ENCODE measurements at regions of chr1 and their contacts with region 1.

Region 1: GRCh38 chr1:162056043-162056442 is 13.4 kb upstream of the NOS1AP start:
- DNase-seq: peak; percentile 81

Region 2: DNA sequence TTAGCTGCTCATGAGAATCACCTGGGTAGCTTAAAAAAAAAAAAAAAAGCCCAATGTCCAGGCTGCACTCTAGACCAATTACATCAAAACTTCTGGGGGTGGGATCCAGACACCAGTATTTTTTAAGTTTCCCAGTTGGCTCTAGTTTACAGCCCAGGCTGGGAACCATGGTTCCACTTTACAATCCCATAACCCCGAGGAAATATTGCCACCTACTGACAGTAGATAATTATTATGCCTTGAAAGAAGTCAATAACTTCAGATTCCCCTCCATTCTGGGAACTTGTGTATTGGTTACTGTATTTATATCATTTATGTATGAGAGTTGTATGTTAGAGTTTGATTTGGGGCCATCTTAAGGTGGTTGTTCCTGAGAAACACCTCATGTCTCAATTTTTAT is 220.4 kb after region 1 on chr1:
- intact Hi-C with region 1: loop called in 1 of 2 experiments (anchors 2 kb)
- DNase-seq: no peak

Region 3: DNA sequence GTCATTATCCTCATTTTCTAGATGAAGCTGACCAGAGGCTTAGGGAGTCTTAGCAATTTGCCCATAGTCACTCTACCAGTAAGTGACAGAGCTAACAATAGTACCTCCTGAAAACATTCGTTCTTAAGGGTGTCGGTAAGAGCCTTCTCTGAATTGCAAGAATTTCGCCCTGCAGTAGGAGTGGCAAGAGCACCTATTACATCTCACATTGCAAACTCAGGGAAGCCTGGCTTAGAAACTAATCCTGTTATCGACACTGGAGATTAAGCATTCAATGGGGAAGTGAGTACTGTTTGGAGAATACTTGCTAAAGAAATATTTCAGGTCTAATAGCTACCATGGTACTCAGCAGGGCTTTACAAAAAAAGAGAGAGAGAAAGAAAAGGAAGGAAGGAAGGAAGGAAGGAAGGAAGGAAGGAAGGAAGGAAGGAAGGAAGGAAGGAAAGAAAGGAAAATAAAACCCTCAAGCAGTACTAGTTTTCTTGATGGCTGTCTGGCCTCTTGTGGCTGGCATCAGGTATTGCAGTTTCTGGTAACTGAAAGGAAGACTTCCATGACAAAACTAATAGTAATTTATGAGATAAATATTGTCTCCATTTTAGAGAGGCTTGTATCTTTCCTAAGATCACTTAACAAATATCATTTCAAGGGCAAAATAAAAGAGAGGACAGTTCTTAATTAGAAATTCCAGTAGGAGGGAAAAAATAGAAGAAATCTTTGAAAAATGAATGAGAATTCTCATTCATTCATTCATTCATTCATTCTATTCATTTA is 335.9 kb after region 1 on chr1:
- intact Hi-C with region 1: loop called (anchors 5 to 10 kb)
- DNase-seq: no peak